ENCODE measurements at regions of chr12 and their contacts with region 1.

Region 1: GRCh38 chr12:56224102-56224701 is at the start of gene NABP2:
- DNase-seq: peak; percentile 95
- H3K4me3 Mint-ChIP-seq: peak within 1 kb of the TSS; percentile 89
- H3K27ac Mint-ChIP-seq: peak within 1 kb of the TSS; percentile 76
- H3K4me1 Mint-ChIP-seq: peaks cover 53% of the 10 kb centered on the region
- H3K27me3 Mint-ChIP-seq: no peaks in the 10 kb centered on the region
- total RNA-seq, gene NABP2: 49.6 to 52.3 TPM

Region 2: GRCh38 chr12:56158029-56158925 is 65.9 kb before region 1 on chr12 and contains the start of gene MYL6:
- CTCF ChIA-PET with region 1: interaction called, 4 read pairs
- POLR2A ChIA-PET with region 1: interaction called, 11 read pairs
- DNase-seq: peak; percentile 94
- H3K4me3 Mint-ChIP-seq: peak within 1 kb of the TSS; percentile 91
- H3K27ac Mint-ChIP-seq: peak within 1 kb of the TSS; percentile 90
- H3K4me1 Mint-ChIP-seq: peaks cover 59% of the 10 kb centered on the region
- H3K27me3 Mint-ChIP-seq: no peaks in the 10 kb centered on the region
- total RNA-seq, gene MYL6: 1,594 to 1,602 TPM

Region 3: DNA sequence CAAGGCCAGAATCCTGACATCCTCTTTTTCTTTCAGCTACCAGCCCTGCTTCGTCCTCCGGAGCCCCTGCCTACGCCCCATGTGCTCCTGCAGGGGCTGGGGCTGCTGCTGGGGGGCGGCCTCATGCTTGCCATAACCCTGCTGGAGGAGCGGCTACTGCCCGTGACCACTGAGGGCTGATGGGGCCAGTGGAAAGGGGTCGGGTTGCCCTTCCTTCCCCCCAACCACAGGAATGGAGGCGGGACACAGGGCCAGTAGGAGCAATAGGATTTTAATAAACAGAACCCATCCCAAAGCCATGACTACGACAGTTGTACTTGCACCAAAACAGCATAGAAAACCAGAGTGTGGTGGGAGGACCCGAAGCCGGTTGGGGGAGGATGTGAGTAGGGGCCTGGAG is 13.3 kb after region 1 on chr12:
- CTCF ChIA-PET with region 1: interaction called, 3 read pairs
- POLR2A ChIA-PET with region 1: interaction called, 11 read pairs
- DNase-seq: no peak
- H3K4me3 Mint-ChIP-seq: no peak overlapping the region
- H3K27ac Mint-ChIP-seq: no peak overlapping the region
- H3K4me1 Mint-ChIP-seq: no peaks in the 10 kb centered on the region
- H3K27me3 Mint-ChIP-seq: no peaks in the 10 kb centered on the region

Region 4: DNA sequence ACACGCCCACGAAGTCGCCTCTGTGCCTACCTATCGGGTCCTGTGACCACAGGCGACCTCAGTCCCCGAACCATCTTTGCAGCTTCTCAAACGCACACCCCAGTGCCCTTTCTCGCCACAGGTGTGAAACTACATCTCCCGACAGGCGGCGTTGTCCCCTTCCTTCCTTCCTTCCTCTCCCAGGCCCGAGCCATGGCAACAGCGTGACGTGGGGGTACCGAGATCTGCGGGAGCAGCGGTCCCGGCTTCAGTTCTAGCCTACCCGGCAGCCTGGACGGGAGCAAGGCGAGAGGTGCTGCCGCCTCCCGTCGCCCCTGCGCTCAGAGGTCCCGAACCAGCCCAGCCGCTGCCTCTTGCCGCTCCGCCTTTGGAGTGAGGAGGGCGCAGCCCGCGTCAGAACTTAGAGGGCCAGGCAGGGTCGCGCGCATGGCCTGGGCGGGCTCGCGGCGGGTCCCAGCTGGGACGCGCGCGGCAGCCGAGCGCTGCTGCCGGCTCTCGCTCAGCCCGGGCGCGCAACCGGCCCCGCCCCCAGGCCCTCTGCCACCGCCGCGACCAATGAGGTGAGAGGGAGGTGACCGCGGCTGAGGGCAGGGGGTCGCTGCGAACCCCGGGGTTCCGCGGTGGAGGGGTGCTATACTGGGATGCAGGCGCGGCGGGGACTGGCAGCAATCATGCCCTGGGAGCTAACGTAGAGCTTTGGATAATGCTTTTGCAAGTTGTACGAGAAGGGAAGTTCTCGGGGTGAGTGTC is 42.7 kb after region 1 on chr12 and contains the start of gene COQ10A:
- CTCF ChIA-PET with region 1: interaction called, 15 read pairs
- POLR2A ChIA-PET with region 1: interaction called, 14 read pairs
- DNase-seq: peak; percentile 90
- H3K4me3 Mint-ChIP-seq: peak within 1 kb of the TSS; percentile 87
- H3K27ac Mint-ChIP-seq: peak within 1 kb of the TSS; percentile 80
- H3K4me1 Mint-ChIP-seq: peaks cover 21% of the 10 kb centered on the region
- H3K27me3 Mint-ChIP-seq: no peaks in the 10 kb centered on the region
- total RNA-seq, gene COQ10A: 12.8 to 16.7 TPM

Region 5: DNA sequence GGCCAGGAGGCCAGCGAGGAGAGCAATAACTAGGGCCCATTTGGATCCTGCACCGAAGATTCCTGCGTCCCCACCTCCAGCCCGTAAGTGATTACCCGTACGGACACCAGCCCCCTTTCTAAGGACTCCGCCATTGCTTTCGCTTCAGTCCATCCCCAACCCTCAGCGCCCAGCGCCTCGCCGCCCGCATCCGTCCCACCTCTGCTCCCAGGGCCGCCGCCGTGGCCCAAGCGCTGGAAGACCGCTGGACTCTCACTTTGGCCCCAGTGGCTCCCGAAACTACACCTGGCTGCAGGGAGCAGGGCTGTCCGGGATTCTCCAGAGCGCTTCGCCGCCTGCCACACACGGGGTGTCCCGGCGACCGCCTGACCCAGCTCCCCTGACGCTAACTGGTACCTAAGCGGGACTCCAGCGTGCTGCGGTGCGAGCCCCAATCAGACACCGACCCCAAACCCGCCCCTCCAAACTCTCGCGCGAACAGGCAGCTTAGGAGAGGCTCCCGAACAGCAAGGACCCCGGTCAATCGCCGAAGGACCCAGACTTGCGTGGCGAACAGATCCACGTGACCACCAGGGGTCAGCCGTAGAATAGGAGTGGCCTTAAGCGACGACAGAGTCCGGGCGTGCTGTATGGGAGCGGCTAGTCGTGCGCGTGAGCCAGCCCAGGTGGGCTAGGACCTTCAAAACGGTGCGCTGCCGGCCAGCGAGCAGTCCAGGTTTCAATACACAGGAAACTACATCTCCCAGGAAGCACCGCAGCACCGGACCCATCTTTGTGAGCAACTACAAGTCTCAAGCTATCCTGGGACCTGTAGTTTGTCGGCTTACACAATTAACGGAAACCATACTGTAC is 91.6 kb after region 1 on chr12 and contains the start of gene CNPY2:
- CTCF ChIA-PET with region 1: interaction called, 3 read pairs
- POLR2A ChIA-PET with region 1: interaction called, 13 read pairs
- DNase-seq: peak; percentile 94
- H3K4me3 Mint-ChIP-seq: peak within 1 kb of the TSS; percentile 96
- H3K27ac Mint-ChIP-seq: peak within 1 kb of the TSS; percentile 94
- H3K4me1 Mint-ChIP-seq: peaks cover 21% of the 10 kb centered on the region
- H3K27me3 Mint-ChIP-seq: no peaks in the 10 kb centered on the region
- total RNA-seq, gene CNPY2: 95.0 to 99.3 TPM

Measured in activated CD4-positive, alpha-beta memory T cell treated with anti-CD3 and anti-CD28 coated beads, Interleukin-2, amount 10 ng/mL, durations not matched to agents 7 days and 5 days (primary cell).